Posterior cingulate gyrus (tissue), 11 donors: ENCODE measurements at regions of chr7 and their contacts with region 1.

Region 1: DNA sequence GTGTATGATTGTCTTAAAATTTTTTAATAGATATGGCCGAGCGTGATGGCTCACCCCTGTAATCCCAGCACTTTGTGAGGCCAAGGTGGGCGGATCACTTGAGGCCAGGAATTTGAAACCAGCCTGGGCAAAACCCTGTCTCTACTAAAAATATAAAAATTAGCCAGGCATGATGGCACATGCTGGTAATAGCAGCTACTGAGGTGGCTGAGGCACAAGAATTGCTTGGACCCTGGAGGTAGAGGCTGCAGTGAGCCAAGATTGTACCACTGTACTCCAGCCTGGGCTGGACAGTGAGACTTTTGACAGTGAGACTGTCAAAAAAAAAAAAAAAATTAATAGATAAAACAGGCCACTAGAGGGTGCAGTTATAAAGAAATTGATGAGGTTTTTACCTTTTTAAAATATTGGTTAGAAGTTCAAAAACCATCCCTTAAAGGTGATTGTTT is 20.5 kb downstream of the NOM1 start:
- DNase-seq: no peak

Region 2: DNA sequence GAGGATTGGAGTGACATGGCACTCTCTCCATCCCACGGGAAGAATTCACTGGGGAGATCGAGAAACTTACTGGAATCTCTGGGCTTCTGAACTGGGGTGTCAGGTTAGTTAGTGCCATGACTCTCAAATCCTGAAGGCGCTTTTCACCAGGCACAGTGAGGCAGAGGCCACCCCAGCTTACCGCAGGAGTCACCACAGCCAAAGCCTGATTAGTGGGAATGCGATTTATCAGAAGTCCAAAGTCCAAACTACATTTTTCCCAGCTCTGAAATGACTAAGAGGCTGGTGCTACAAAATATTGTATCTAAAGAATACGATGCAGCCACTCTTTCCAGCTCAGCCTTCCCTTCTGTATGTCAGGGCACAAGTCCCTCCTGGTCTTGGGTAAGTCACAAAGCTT is 822.9 kb before region 1 on chr7:
- intact Hi-C with region 1: no loop called
- DNase-seq: no peak

Region 3: DNA sequence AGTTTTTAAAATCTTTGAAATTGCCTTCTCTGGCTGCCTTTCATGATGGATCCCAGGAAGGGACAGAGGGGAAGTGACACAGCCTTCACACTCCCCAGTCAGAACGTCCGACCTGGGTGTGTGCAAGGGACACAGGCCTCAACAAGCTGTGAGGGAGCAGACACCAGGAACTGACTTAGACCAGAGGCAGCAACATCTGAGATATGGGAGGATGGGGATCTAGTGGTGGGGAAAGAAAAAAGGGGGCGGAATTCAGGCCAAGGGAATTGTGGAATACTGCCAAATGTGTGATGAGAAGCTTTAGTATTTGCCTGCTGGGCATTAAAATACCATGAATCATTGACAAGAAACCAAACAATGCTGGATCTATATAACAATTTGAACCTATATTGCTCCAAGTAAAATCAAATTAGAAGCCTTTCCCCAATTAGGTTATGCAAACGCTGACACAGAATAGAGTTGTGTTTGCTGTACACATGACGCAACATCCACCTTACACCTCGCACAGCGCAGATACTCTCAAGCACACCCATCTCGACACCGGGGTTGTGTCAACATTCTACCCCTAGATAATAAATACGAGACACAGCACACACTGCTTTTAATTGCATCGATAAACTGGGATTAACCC is 57.7 kb after region 1 on chr7:
- intact Hi-C with region 1: no loop called
- DNase-seq: peak in 1 of 10 donors; percentile 21

Region 4: GRCh38 chr7:157273208-157274093 is 303.5 kb after region 1 on chr7:
- intact Hi-C with region 1: loop called (anchors 10 kb)
- DNase-seq: peak in 9 of 10 donors; percentile 46 to 94 (median 60)